ENCODE measurements at regions of chr16 and their contacts with region 1.

Region 1: DNA sequence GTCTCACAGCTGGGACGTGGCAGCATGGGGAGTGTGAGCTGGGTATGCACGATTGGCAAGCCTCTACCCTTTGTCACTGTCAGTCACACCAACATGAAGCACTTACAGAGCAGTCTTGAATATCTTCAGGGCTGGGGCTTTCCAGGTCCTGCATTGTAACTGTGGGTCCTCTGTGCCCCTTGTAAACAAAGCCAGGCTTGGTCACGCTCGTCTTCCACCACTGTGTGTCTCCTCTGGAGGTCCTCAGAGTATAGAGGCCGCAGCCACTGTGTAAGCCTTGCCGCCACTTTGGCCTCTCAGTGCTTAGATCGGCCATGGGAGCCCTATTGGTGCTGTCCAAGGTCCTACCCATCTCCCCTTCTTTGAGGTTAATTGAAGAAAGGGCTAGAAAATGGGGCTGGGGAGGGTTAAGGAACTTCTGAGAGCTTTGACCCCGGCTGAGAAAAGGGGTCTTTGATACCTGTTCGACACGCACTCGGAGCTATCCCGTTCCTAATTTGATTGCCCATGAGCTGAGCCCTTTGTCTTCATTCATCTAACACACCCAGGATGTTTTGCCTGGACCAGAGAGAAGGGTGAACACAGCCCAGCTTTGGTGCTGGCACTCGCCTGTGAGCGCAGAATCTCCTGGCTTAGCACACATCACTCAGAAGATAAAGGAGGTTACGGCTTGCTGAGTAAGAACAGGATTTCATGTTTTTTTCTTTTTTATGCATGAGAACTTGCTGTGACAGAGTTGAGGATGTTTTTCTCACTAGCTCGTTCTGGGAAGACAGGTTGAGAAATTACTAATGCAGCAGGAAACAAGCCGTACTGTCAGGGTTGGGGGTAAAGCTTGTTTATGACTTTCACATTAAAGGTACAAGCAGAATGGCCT is 267.9 kb downstream of the CPPED1 start:
- DNase-seq: peak; percentile 63
- H3K4me3 Mint-ChIP-seq: peak overlapping the region; percentile 57
- H3K27ac Mint-ChIP-seq: peak overlapping the region; percentile 94
- H3K4me1 Mint-ChIP-seq: peaks cover 98% of the 10 kb centered on the region
- H3K27me3 Mint-ChIP-seq: no peaks in the 10 kb centered on the region

Region 2: DNA sequence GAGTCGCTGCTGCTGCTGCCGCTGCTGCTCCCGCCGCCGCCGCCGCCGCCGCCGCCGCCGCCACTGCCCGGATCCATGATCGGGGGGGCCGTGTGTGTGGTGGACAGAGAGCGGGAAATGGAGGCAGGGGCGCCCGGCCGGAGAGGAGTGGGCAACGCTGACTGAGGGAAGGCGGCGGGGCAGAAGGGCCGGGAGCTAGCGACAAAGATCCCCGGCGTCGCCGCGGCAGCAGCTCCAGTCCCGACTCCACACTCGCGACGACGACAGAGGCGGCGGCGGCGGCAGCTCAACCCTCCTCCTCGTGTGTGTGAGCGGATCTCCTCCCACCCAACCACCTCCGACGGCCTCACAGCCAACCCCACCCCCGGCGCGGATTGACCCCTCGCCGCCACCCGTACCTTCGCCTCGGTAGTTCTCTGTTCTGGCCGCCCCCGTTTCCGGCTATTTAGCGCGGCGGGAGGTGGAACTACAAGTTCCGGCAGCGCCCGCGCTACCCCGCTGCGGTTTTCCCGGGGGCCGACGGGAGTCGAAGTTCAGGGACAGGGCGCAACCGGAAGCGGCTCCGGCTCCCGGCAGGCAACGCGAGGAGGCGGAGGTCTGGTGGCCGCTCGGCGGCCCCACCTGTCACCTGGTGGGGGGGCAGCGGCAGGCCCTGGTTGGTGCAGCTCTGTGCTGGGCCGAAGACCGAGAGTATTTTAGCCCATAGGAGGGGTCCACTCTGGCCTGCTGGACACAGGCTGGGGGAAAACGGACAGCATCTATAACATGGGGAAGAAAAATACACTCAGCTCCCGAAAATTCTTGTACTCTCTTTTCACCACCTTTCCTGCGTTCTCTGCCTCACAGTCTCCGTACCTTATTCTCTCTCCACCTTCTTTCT is 619.9 kb before region 1 on chr16 and contains the start of gene GSPT1:
- intact Hi-C with region 1: loop called (anchors 10 kb)
- DNase-seq: peak; percentile 99
- H3K4me3 Mint-ChIP-seq: peak within 1 kb of the TSS; percentile 91
- H3K27ac Mint-ChIP-seq: peak within 1 kb of the TSS; percentile 94
- H3K4me1 Mint-ChIP-seq: peaks cover 32% of the 10 kb centered on the region
- H3K27me3 Mint-ChIP-seq: peaks cover 8% of the 10 kb centered on the region
- total RNA-seq, gene GSPT1: 207 and 214 TPM in 2 replicates

Region 3: DNA sequence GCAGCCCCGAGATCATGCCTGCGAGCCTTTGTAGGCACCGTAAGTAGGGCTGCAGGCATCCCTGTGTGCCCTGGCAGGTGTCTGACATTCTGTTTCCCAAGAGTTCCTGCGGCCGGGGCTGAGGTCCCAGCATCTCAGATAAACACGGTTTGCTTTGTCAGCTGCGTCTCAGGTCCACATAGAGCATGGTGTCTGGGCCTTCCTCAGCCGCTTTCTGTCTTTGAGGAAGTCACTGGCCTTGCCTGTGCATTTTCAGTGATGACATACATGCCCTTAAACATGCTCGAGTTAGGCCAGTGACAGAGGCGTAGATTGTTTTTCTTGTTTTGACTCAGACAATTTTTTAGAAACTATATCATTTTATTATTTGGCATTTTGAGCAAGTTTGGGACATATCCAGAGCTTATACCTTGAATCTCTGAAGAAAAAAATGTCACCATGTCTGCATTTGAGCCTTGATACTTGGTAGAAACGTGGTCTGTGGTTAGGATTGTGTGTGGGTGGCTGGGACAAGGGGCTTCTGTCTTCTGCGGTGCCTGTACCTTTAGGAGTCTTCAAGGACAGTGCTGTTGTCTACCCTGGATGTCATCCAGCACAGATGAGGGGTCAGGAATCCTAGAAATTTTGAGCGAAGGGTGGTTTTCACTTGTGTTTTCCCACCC is 453.4 kb before region 1 on chr16:
- intact Hi-C with region 1: loop called (anchors 2 kb)
- DNase-seq: no peak
- H3K4me3 Mint-ChIP-seq: no peak overlapping the region
- H3K27ac Mint-ChIP-seq: peak overlapping the region; percentile 71
- H3K4me1 Mint-ChIP-seq: peaks cover 51% of the 10 kb centered on the region
- H3K27me3 Mint-ChIP-seq: no peaks in the 10 kb centered on the region

Region 4: DNA sequence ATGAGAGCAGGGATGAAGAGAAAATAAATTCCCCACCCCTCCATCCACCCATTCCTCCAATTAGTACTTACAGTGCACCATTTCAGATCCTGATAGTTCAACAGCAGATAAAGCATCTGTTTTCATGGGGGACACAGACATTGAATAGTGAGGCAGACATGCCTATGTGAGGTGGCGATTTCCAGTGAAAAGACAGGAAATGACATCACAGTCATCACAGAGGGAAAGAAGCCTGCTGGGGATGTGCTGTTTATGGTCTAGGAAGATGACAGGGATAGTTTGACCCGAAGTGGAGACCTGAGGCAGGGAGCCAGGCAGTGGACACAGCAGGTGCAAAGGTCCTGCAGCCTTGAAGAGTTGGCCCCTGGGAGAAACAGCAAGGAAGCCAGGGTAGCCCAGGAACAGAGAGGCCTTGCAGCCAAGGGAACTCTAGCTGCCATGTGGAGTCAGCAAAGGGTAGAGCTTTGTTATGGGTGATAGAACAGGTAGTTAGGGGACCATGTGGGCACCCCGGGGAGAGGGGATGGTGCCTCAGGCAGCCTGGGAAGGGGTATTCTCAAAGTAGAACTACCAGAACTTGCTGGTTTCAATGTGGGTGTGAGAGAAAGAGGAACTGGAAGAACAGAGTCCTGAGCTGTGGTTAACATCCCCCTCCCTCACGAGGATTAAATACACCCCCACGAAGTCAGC is 11.3 kb after region 1 on chr16:
- intact Hi-C with region 1: loop called (anchors 1 kb)
- DNase-seq: no peak
- H3K4me3 Mint-ChIP-seq: peak overlapping the region; percentile 70
- H3K27ac Mint-ChIP-seq: peak overlapping the region; percentile 85
- H3K4me1 Mint-ChIP-seq: peaks cover 96% of the 10 kb centered on the region
- H3K27me3 Mint-ChIP-seq: no peaks in the 10 kb centered on the region

Region 5: GRCh38 chr16:12613131-12613991 is 77.6 kb after region 1 on chr16:
- intact Hi-C with region 1: loop called (anchors 1 kb)
- DNase-seq: no peak
- H3K4me3 Mint-ChIP-seq: no peak overlapping the region
- H3K27ac Mint-ChIP-seq: peak overlapping the region; percentile 61
- H3K4me1 Mint-ChIP-seq: peaks cover 35% of the 10 kb centered on the region
- H3K27me3 Mint-ChIP-seq: peaks cover 6% of the 10 kb centered on the region

Region 6: GRCh38 chr16:12750554-12750918 is 214.8 kb after region 1 on chr16:
- intact Hi-C with region 1: loop called (anchors 1 kb)
- DNase-seq: no peak
- H3K4me3 Mint-ChIP-seq: peak overlapping the region; percentile 58
- H3K27ac Mint-ChIP-seq: peak overlapping the region; percentile 77
- H3K4me1 Mint-ChIP-seq: peaks cover 33% of the 10 kb centered on the region
- H3K27me3 Mint-ChIP-seq: no peaks in the 10 kb centered on the region

Region 7: GRCh38 chr16:12868169-12868568 is 332.4 kb after region 1 on chr16:
- intact Hi-C with region 1: no loop called
- DNase-seq: no peak
- H3K4me3 Mint-ChIP-seq: no peak overlapping the region
- H3K27ac Mint-ChIP-seq: no peak overlapping the region
- H3K4me1 Mint-ChIP-seq: no peaks in the 10 kb centered on the region
- H3K27me3 Mint-ChIP-seq: no peaks in the 10 kb centered on the region